ENCODE measurements at regions of chr6 and their contacts with region 1.

Region 1: GRCh38 chr6:170295510-170296422 is 4.9 kb upstream of the DLL1 start:
- DNase-seq: peak in 6 of 10 donors; percentile 36 to 73 (median 45)
- ATAC-seq: peak; percentile 45 to 52
- H3K4me3 Mint-ChIP-seq: peak overlapping the region; percentile 64 to 94 (median 75)
- H3K27ac Mint-ChIP-seq: no peak overlapping the region
- H3K4me1 Mint-ChIP-seq: peaks cover 22 to 47% (median 40%) of the 10 kb centered on the region in 4 donors
- H3K27me3 Mint-ChIP-seq: peaks cover 0 to 36% (median 10%) of the 10 kb centered on the region in 5 donors

Region 2: GRCh38 chr6:170087941-170088581 is 207.7 kb before region 1 on chr6:
- POLR2A ChIA-PET with region 1: interaction called, 36 read pairs
- DNase-seq: peak; percentile 19 to 77 (median 50)
- ATAC-seq: peak; percentile 72 to 76
- H3K4me3 Mint-ChIP-seq: peak overlapping the region; percentile 81 to 96 (median 90)
- H3K27ac Mint-ChIP-seq: peak overlapping the region; percentile 88 to 98 (median 96)
- H3K4me1 Mint-ChIP-seq: peaks cover 24 to 44% (median 36%) of the 10 kb centered on the region in 4 donors
- H3K27me3 Mint-ChIP-seq: no peaks in the 10 kb centered on the region

Region 3: DNA sequence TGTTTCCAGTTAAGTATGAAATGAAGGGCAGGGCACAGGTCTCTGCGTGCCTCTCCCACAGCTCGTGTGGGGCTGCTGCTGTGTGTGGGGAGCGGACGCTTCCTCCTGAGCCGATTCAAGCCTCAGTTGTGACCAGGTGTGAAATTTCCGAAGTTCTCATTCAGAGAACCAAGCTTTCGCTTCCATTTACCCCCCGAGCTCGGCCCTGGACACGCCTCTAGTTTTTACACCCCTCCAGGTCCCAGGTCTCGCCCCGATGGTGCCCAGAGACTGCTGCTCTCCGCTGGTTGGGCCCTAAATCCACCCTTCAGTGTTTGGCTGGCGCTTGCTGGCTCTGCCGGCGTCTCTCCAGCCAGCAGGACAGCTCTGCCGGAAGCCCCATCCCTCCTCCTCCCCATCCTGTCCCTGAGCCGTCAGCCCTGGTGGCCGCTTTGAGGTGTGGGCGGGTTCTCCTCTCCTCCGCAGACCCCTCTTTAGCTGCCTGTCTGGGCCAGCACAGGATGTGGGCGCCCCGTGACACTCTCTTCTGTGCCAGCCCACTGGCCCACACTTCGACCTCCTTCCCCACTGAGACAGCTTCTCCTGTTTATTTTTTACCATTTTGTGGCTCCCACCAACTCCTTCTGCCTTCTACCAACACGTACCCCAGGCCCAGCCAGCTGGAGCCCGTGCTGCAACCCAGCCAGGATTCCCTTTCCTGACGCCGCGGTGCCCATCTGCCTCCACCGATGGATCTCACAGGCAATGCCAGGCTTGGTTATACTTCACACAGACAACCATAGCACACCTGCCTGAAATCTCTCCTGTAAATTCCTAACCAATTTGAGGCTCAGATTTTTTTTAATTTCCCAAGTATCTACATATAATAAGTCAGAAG is 147.7 kb before region 1 on chr6:
- POLR2A ChIA-PET with region 1: interaction called, 18 read pairs
- DNase-seq: peak; percentile 14 to 87 (median 68)
- ATAC-seq: peak; percentile 86 to 88
- H3K4me3 Mint-ChIP-seq: peak overlapping the region; percentile 74 to 99 (median 86)
- H3K27ac Mint-ChIP-seq: peak overlapping the region; percentile 83 to 99 (median 94)
- H3K4me1 Mint-ChIP-seq: peaks cover 59 to 80% (median 71%) of the 10 kb centered on the region in 4 donors
- H3K27me3 Mint-ChIP-seq: no peaks in the 10 kb centered on the region

Region 4: DNA sequence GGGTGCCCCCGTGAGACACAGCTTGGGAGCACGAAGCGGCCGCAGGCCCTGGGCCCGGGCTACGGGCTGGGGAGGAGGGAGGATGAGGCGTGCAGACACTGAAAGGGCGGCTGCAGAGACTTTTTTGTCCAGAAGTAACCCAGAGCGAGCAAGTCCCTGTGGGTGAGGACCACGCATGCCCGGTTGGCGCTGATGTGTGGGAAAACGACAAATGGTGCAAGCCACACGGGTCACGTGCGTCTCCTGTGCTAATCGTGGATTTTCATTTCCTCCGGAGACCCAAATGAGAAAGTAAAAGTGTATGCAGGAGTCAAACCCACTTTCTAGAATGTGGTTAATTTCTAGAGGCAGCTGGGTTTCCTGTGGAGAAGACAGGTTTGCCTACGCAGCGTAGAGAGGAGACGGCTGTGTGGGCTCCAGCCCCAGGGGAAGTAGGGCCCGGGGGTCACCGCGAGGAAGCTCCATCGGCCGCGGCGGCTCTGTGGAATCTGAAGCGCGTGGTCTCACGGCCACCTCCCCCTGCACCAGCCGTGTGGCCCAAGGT is 23.9 kb before region 1 on chr6:
- POLR2A ChIA-PET with region 1: interaction called, 61 read pairs
- DNase-seq: peak; percentile 56 to 92 (median 80)
- ATAC-seq: peak; percentile 91
- H3K4me3 Mint-ChIP-seq: peak overlapping the region; percentile 82 to 94 (median 90)
- H3K27ac Mint-ChIP-seq: peak overlapping the region; percentile 89 to 98 (median 96)
- H3K4me1 Mint-ChIP-seq: peaks cover 17 to 41% (median 27%) of the 10 kb centered on the region in 4 donors
- H3K27me3 Mint-ChIP-seq: no peaks in the 10 kb centered on the region

Region 5: DNA sequence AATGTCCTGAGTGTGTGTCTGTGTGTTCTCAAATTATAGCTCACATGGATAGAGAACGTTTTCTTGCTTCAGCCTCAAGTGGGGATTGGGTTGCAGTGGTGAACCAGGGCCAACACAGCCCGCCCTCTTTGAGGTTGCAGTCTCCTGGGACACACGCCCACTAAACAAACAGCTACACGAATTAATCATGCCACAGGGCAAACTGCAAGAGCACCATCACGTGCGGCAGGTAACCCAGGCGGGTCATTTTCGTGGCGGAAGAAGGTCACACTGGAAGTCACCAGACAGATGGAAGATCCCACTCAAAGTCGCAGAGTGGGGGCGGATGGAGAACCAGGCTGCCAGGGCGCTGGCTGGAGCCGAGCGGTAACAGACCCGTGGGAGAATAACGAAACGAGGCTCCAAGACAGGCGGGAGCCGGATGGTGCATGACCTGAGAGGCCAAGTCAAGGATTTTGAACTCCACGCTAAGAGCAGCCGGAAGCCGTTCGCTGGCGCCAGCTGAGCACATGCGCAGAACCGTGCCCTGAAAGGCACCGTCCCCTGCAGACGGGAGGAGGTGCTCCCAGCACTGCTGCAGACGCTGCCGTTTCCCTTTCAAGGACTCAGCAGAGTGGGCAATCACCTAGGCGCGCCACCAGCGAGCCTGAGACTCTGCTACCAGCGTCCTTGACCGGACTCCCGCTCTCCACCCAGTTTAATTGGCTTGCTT is 15.6 kb before region 1 on chr6:
- POLR2A ChIA-PET with region 1: interaction called, 14 read pairs
- DNase-seq: peak in 6 of 10 donors; percentile 31 to 75 (median 68)
- ATAC-seq: peak; percentile 82 to 87
- H3K4me3 Mint-ChIP-seq: peak overlapping the region; percentile 65 to 88 (median 73)
- H3K27ac Mint-ChIP-seq: peak overlapping the region; percentile 58 to 97 (median 92)
- H3K4me1 Mint-ChIP-seq: peaks cover 18 to 36% (median 30%) of the 10 kb centered on the region in 4 donors
- H3K27me3 Mint-ChIP-seq: peaks cover 0 to 2% (median 0%) of the 10 kb centered on the region in 5 donors

Region 6: GRCh38 chr6:170306324-170307079 is 10.7 kb after region 1 on chr6 and contains the start of gene FAM120B:
- POLR2A ChIA-PET with region 1: interaction called, 11 read pairs
- DNase-seq: peak; percentile 90 to 97 (median 94)
- ATAC-seq: peak; percentile 94 to 96
- H3K4me3 Mint-ChIP-seq: peak within 1 kb of the TSS; percentile 89 to 99 (median 96)
- H3K27ac Mint-ChIP-seq: peak within 1 kb of the TSS; percentile 93 to 99 (median 98)
- H3K4me1 Mint-ChIP-seq: peaks cover 33 to 52% (median 42%) of the 10 kb centered on the region in 4 donors
- H3K27me3 Mint-ChIP-seq: peaks cover 0 to 16% (median 5%) of the 10 kb centered on the region in 5 donors
- polyA plus RNA-seq, gene FAM120B: 16.4 to 34.7 (median 29.6) TPM

Measured in naive thymus-derived CD8-positive, alpha-beta T cell (primary cell).